PC-3 (cell line): ENCODE measurements at regions of chr2 and their contacts with region 1.

Region 1: DNA sequence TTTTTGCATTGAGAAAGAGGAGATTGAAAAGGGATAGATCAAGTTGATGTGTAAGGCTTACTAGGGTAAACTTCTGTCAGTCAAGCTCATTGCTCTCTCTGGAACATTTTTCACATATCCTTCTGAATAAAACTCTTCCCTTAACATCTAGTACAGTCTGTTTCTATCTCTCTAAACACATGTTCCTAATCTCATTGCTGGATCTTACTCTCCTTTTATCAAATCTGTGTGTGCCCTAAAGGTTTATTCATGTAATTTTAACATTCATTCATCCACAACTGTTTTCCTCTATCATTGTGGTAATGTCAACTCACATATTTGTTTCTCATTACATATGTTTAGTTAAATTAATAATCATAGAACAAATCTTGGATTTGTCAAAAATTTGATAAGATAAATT is 277.9 kb upstream of the GULP1 start:
- DNase-seq: no peak
- ATAC-seq: no peak
- H3K4me3 ChIP-seq: no peak overlapping the region
- H3K27ac ChIP-seq: no peak overlapping the region
- H3K4me1 ChIP-seq: no peaks in the 10 kb centered on the region
- H3K27me3 ChIP-seq: no peaks in the 10 kb centered on the region
- CTCF ChIP-seq: no peak

Region 2: GRCh38 chr2:188000189-188000588 is 13.6 kb before region 1 on chr2:
- CTCF ChIA-PET with region 1: no interaction called
- POLR2A ChIA-PET with region 1: interaction called, 10 read pairs
- intact Hi-C with region 1: no loop called
- DNase-seq: no peak
- ATAC-seq: no peak
- H3K4me3 ChIP-seq: no peak overlapping the region
- H3K27ac ChIP-seq: no peak overlapping the region
- H3K4me1 ChIP-seq: no peaks in the 10 kb centered on the region
- H3K27me3 ChIP-seq: no peaks in the 10 kb centered on the region
- CTCF ChIP-seq: no peak

Region 3: GRCh38 chr2:188219541-188219940 is 205.8 kb after region 1 on chr2:
- CTCF ChIA-PET with region 1: no interaction called
- POLR2A ChIA-PET with region 1: no interaction called
- intact Hi-C with region 1: no loop called
- DNase-seq: no peak
- ATAC-seq: no peak
- H3K4me3 ChIP-seq: no peak overlapping the region
- H3K27ac ChIP-seq: no peak overlapping the region
- H3K4me1 ChIP-seq: no peaks in the 10 kb centered on the region
- H3K27me3 ChIP-seq: no peaks in the 10 kb centered on the region
- CTCF ChIP-seq: no peak

Region 4: GRCh38 chr2:188435115-188435514 is 421.3 kb after region 1 on chr2:
- CTCF ChIA-PET with region 1: no interaction called
- POLR2A ChIA-PET with region 1: no interaction called
- intact Hi-C with region 1: no loop called
- DNase-seq: no peak
- ATAC-seq: no peak
- H3K4me3 ChIP-seq: no peak overlapping the region
- H3K27ac ChIP-seq: no peak overlapping the region
- H3K4me1 ChIP-seq: no peaks in the 10 kb centered on the region
- H3K27me3 ChIP-seq: no peaks in the 10 kb centered on the region
- CTCF ChIP-seq: no peak